RWPE1 (cell line): ENCODE measurements at regions of chr6 and their contacts with region 1.

Region 1: DNA sequence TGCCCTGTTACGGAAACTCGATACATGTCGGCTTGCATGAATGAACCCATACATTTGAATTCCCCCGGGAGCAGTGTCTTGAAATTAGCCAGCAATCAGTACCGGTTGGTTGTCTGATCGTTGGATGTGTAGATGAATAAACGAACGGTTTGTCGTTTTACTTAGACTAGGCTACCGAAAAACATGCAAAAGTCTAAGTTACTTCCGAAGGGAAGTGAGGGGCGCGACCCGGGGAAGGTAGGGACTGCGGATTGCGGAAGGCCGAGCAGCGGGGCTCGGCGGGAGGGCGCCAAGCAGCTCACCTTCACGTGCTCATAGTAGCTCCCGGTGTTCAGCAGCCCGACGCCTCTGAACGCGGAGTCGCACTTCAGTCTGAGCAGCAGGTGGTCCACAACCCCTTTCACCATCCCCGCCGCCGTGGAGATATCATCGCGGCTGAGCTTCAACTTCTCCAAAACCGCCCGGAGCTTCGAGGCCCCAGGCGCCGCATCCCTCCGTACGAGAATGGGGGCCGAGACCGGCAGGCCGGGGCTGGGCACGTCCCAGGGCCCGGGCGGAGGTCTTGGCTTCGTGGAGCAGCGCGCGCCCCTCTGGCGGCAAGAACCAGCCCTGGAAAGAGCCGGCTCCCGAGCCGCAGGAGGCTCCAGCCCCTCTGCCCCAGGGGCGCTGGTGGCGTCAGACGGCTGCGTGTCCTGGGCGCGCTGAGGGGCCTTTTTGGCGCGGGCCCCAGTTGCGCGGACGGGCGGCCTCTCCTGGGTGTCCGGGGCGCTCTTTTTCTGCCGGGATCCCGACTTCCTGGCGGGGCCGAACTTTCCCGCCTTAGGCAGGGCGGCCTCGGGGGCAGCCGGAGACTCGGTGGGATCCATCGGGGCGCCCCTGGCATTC is 632 bp downstream of the CGAS start:
- DNase-seq: peak; percentile 51
- H3K27ac ChIP-seq: peak overlapping the region; percentile 96
- CTCF ChIP-seq: no peak

Region 2: GRCh38 chr6:73382461-73383113 is 68.9 kb before region 1 on chr6:
- CTCF ChIA-PET with region 1: no interaction called
- POLR2A ChIA-PET with region 1: no interaction called
- DNase-seq: no peak
- H3K27ac ChIP-seq: no peak overlapping the region
- CTCF ChIP-seq: no peak

Region 3: GRCh38 chr6:73461537-73462350 is 10.3 kb after region 1 on chr6 and contains the start of gene MTO1:
- CTCF ChIA-PET with region 1: no interaction called
- POLR2A ChIA-PET with region 1: interaction called, 12 read pairs
- DNase-seq: peak; percentile 90
- H3K27ac ChIP-seq: peak within 1 kb of the TSS; percentile 99
- CTCF ChIP-seq: no peak

Region 4: GRCh38 chr6:73691512-73691911 is 240.0 kb after region 1 on chr6:
- CTCF ChIA-PET with region 1: no interaction called
- POLR2A ChIA-PET with region 1: no interaction called
- DNase-seq: no peak
- H3K27ac ChIP-seq: no peak overlapping the region
- CTCF ChIP-seq: no peak